ENCODE measurements at regions of chr3 and their contacts with region 1.

Region 1: GRCh38 chr3:187616307-187616972 is 53.8 kb downstream of the SST start:
- H3K4me3 ChIP-seq: no peak overlapping the region
- H3K27ac ChIP-seq: no peak overlapping the region
- H3K4me1 ChIP-seq: no peaks in the 10 kb centered on the region
- CTCF ChIP-seq: no peak

Region 2: DNA sequence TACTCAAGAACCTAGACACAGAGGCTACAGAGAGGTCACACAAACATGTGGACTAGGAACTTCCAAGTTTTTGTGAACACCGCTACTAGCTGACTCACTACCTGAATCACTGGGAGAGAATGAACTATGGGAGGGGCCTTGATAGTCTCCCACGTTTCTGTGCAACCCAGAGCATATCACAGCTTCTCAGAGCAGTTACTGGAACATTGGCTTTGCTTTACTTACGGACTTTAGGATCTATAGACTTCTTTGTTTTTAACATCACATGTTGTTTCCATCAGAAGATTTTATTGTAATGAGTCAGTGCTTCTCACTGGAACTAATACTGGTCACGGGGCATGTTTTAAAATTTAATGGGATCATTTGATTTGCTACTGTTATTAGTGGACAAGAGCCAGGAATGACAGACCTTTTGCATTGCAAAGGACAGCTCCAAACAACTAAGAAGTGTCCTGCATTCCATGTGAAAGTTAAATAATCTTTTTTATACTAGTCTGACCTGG is 212.6 kb before region 1 on chr3:
- CTCF ChIA-PET with region 1: no interaction called
- POLR2A ChIA-PET with region 1: no interaction called
- H3K4me3 ChIP-seq: no peak overlapping the region
- H3K27ac ChIP-seq: no peak overlapping the region
- H3K4me1 ChIP-seq: no peaks in the 10 kb centered on the region
- CTCF ChIP-seq: no peak

Region 3: DNA sequence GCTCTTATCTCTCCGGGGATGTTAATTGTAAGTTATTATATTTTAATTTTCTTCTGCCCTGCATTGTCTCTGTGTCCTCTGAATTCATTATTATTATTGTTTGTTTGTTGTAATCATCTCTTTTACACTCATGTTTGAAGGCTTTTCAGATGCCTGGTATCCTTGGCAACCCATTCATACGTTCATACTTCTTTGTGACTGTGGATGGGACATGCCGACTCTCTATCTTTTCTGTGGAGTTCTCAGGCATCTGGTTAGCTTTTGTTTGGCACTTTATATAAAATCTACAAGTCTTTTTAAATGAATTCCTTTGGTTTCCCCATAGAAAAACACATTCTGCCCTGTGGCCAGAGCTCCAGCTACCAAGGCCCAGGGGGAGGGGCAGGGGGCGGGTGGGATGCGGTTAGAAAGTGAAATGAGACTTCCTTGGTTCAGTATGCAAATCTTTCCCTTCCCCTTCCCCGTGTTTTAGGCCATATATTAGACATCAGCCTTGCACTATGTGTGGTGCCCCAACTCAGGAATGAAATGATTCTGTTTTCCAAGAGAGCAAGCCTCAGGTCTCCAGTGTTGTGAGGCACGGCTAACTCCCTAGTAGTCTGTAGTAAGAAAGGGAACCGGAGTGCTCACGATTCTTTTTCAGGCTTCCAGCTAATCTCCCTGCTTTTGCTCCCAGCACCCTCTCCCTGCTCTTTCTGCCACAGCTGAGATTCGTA is 25.4 kb before region 1 on chr3:
- CTCF ChIA-PET with region 1: interaction called, 10 read pairs
- POLR2A ChIA-PET with region 1: no interaction called
- H3K4me3 ChIP-seq: no peak overlapping the region
- H3K27ac ChIP-seq: no peak overlapping the region
- H3K4me1 ChIP-seq: no peaks in the 10 kb centered on the region
- CTCF ChIP-seq: no peak

Region 4: DNA sequence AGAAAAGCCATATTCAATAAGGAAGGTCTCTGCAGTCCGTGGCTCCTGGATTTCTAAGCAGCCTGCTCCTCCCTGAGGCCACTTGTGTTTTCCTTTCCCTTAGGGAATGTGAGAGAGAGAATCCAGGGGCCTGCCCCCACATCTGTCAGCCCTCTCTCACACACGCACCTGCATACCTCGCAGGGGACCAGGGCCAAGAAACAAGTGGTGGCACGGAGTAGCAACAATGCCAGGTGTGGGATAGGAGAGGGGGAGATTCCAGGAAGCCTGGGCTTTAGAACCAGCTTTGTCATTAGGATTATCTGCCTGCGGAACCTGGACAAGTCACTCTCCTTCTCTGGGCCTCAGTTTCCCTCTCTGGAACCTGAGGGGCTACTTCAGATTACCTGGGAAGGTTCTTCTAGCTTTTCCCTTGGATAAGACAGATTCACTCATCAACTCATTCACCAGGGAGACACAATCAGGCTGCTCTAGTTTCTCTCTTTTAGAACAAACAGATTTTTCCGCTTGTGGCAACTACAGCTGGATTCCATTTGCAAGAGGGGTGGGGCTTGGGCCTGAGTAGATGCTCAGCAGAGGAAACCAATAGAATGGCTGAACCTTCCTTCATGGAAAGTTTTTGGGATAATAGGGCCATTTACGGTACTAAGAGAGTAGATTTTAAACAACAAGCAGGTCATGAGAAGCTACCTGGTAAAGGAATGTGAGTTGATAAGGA is 109.4 kb after region 1 on chr3:
- CTCF ChIA-PET with region 1: no interaction called
- POLR2A ChIA-PET with region 1: no interaction called
- H3K4me3 ChIP-seq: no peak overlapping the region
- H3K27ac ChIP-seq: no peak overlapping the region
- H3K4me1 ChIP-seq: no peaks in the 10 kb centered on the region
- CTCF ChIP-seq: no peak

Region 5: DNA sequence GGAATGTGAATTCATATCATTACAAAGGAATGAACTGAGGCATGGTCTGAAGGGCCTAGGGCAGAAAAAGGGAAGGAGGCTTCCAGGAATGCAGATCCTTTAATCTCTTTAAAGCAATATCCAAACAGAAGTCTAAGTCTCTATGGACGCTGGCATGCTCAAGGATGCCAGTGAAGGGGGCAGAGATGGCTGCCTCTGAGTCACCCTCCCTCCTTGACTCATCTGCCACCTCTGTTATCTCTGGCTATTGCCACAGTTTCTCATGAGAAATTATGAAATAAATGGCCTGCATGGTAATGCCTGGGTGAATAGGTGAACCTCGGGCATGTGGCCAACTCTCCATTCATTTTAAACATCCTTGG is 225.1 kb after region 1 on chr3:
- CTCF ChIA-PET with region 1: no interaction called
- POLR2A ChIA-PET with region 1: no interaction called
- H3K4me3 ChIP-seq: no peak overlapping the region
- H3K27ac ChIP-seq: no peak overlapping the region
- H3K4me1 ChIP-seq: no peaks in the 10 kb centered on the region
- CTCF ChIP-seq: no peak